ENCODE measurements at regions of chr1 and their contacts with region 1.

Region 1: GRCh38 chr1:21659099-21659923 is 9.8 kb downstream of the RAP1GAP start:
- DNase-seq: peak; percentile 82 to 85 (median 84)
- ATAC-seq: peak; percentile 90
- H3K4me3 ChIP-seq: no peak overlapping the region
- H3K27ac ChIP-seq: no peak overlapping the region
- H3K4me1 ChIP-seq: peaks cover 16% of the 10 kb centered on the region
- H3K27me3 ChIP-seq: no peaks in the 10 kb centered on the region
- CTCF ChIP-seq: peak; percentile 95 to 99 (median 99)
- POLR2A ChIP-seq: no peak

Region 2: DNA sequence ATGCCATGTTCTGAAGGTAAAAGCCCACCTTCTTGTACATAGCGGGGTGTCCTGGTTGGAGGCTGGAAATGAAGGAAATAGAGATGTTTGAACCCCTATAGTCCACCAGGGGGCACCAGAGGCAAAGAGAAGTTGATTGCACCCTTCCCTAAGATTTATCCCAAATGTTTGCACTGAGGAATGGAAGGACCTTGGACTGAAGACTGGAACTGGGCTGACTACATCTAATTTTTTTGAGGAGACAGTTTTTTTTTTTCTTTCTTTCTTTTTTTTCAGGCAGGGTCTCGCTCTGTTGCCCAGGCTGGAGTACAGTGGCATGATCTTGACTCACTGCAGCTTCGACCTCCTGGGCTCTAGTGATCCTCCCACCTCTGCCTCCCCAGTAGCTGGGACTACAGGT is 427.3 kb before region 1 on chr1:
- intact Hi-C with region 1: loop called (anchors 10 kb)
- DNase-seq: peak; percentile 54 to 67 (median 62)
- ATAC-seq: peak; percentile 82
- H3K4me3 ChIP-seq: no peak overlapping the region
- H3K27ac ChIP-seq: no peak overlapping the region
- H3K4me1 ChIP-seq: peaks cover 3% of the 10 kb centered on the region
- H3K27me3 ChIP-seq: no peaks in the 10 kb centered on the region
- CTCF ChIP-seq: peak; percentile 47 to 93 (median 87)
- POLR2A ChIP-seq: no peak

Region 3: GRCh38 chr1:21511579-21512522 is 147.5 kb before region 1 on chr1:
- intact Hi-C with region 1: loop called (anchors 5 kb)
- DNase-seq: peak in 3 of 4 donors; percentile 34 to 63 (median 52)
- ATAC-seq: peak; percentile 33
- H3K4me3 ChIP-seq: no peak overlapping the region
- H3K27ac ChIP-seq: no peak overlapping the region
- H3K4me1 ChIP-seq: peaks cover 12% of the 10 kb centered on the region
- H3K27me3 ChIP-seq: peaks cover 0 to 11% of the 10 kb centered on the region in 2 donors
- CTCF ChIP-seq: no peak
- POLR2A ChIP-seq: no peak

Region 4: GRCh38 chr1:21604208-21604957 is 54.9 kb before region 1 on chr1:
- intact Hi-C with region 1: loop called (anchors 5 kb)
- DNase-seq: no peak
- ATAC-seq: no peak
- H3K4me3 ChIP-seq: no peak overlapping the region
- H3K27ac ChIP-seq: no peak overlapping the region
- H3K4me1 ChIP-seq: peaks cover 8% of the 10 kb centered on the region
- H3K27me3 ChIP-seq: no peaks in the 10 kb centered on the region
- CTCF ChIP-seq: no peak
- POLR2A ChIP-seq: no peak

Region 5: GRCh38 chr1:21865943-21866706 is 206.8 kb after region 1 on chr1:
- intact Hi-C with region 1: no loop called
- DNase-seq: no peak
- ATAC-seq: no peak
- H3K4me3 ChIP-seq: no peak overlapping the region
- H3K27ac ChIP-seq: no peak overlapping the region
- H3K4me1 ChIP-seq: peaks cover 8% of the 10 kb centered on the region
- H3K27me3 ChIP-seq: no peaks in the 10 kb centered on the region
- CTCF ChIP-seq: no peak
- POLR2A ChIP-seq: no peak